ENCODE measurements at regions of chr13 and their contacts with region 1.

Region 1: GRCh38 chr13:60163478-60164233 is at the start of gene DIAPH3:
- DNase-seq: peak; percentile 84 to 95 (median 89)
- H3K4me3 ChIP-seq: peak within 1 kb of the TSS; percentile 58 to 88 (median 81)
- H3K4me3 Mint-ChIP-seq: peak within 1 kb of the TSS; percentile 88 to 94
- H3K27ac ChIP-seq: peak within 1 kb of the TSS; percentile 58 to 69
- H3K27ac Mint-ChIP-seq: peak within 1 kb of the TSS; percentile 84 to 91 (median 89)
- H3K4me1 ChIP-seq: peaks cover 13 to 14% of the 10 kb centered on the region in 2 donors
- H3K4me1 Mint-ChIP-seq: peaks cover 18% of the 10 kb centered on the region
- H3K27me3 ChIP-seq: no peaks in the 10 kb centered on the region
- H3K27me3 Mint-ChIP-seq: peaks cover 0 to 6% (median 0%) of the 10 kb centered on the region in 3 donors
- CTCF ChIP-seq: no peak
- polyA plus RNA-seq, gene DIAPH3: 0.04 to 0.09 TPM in 2 of 3 donors, not detected in the other

Region 2: GRCh38 chr13:60099631-60100420 is 63.8 kb before region 1 on chr13:
- intact Hi-C with region 1: no loop called
- DNase-seq: no peak
- H3K4me3 ChIP-seq: no peak overlapping the region
- H3K4me3 Mint-ChIP-seq: no peak overlapping the region
- H3K27ac ChIP-seq: no peak overlapping the region
- H3K27ac Mint-ChIP-seq: peak overlapping the region in 1 of 7 donors; percentile 58
- H3K4me1 ChIP-seq: no peaks in the 10 kb centered on the region
- H3K4me1 Mint-ChIP-seq: no peaks in the 10 kb centered on the region
- H3K27me3 ChIP-seq: no peaks in the 10 kb centered on the region
- H3K27me3 Mint-ChIP-seq: no peaks in the 10 kb centered on the region
- CTCF ChIP-seq: no peak

Region 3: GRCh38 chr13:60396783-60397703 is 233.4 kb after region 1 on chr13 and contains the start of gene TDRD3:
- intact Hi-C with region 1: loop called in 1 of 2 experiments (anchors 5 kb)
- DNase-seq: peak; percentile 66 to 76 (median 72)
- H3K4me3 ChIP-seq: peak within 1 kb of the TSS; percentile 60 to 90 (median 72)
- H3K4me3 Mint-ChIP-seq: peak within 1 kb of the TSS; percentile 94 to 98
- H3K27ac ChIP-seq: peak within 1 kb of the TSS; percentile 91 to 92
- H3K27ac Mint-ChIP-seq: peak within 1 kb of the TSS; percentile 94 to 98 (median 96)
- H3K4me1 ChIP-seq: peaks cover 18 to 30% of the 10 kb centered on the region in 2 donors
- H3K4me1 Mint-ChIP-seq: peaks cover 17% of the 10 kb centered on the region
- H3K27me3 ChIP-seq: no peaks in the 10 kb centered on the region
- H3K27me3 Mint-ChIP-seq: no peaks in the 10 kb centered on the region
- CTCF ChIP-seq: peak; percentile 83
- polyA plus RNA-seq, gene TDRD3: 2.7 to 4.8 (median 4.7) TPM